Activated CD8-positive, alpha-beta memory T cell treated with anti-CD3 and anti-CD28 coated beads, Interleukin-2, amount 10 ng/mL, durations not matched to agents 7 days and 5 days (primary cell): ENCODE measurements at regions of chr1 and their contacts with region 1.

Region 1: DNA sequence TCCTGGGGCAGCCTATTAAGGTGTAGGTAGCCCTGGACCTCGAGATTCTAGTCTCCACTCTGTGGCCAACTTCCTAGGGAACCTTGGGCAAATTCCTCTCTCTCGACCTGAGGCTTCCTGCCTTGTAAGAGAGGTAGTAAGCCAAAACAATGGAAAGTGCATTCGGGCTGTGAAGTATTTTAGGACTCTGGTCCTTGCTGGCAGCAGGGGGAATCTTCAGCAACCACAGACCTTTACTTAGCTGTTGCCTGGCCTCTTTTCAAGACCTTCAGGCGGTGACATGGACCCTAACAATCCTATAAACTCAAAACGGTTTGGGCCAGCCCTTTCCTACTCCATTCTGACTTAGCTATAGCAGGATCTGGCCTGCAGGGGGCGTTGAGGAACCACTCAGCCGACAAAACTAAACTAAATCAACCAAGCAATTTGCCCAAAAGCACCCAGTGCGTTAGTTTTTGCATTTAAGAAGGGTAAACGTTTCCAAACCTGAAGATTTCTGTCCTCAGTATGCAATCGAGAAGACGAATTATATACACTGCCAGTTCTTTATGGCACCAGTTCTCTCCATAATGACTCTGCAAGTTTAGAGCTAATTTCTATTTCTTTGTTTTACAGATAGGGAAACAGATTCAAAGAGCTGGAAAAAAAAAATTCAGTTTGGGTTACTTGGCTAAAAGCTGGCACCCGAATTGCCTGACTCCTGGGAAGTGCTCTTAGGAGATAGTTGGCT is 10.9 kb upstream of the SESN2 start:
- DNase-seq: peak; percentile 91
- ATAC-seq: peak; percentile 18
- H3K4me3 Mint-ChIP-seq: peak overlapping the region; percentile 89
- H3K27ac Mint-ChIP-seq: peak overlapping the region; percentile 100
- H3K4me1 Mint-ChIP-seq: peaks cover 52% of the 10 kb centered on the region
- H3K27me3 Mint-ChIP-seq: no peaks in the 10 kb centered on the region

Region 2: GRCh38 chr1:28144203-28145135 is 104.0 kb before region 1 on chr1:
- CTCF ChIA-PET with region 1: no interaction called
- DNase-seq: peak; percentile 76
- ATAC-seq: peak; percentile 96
- H3K4me3 Mint-ChIP-seq: no peak overlapping the region
- H3K27ac Mint-ChIP-seq: no peak overlapping the region
- H3K4me1 Mint-ChIP-seq: peaks cover 18% of the 10 kb centered on the region
- H3K27me3 Mint-ChIP-seq: peaks cover 68% of the 10 kb centered on the region

Region 3: DNA sequence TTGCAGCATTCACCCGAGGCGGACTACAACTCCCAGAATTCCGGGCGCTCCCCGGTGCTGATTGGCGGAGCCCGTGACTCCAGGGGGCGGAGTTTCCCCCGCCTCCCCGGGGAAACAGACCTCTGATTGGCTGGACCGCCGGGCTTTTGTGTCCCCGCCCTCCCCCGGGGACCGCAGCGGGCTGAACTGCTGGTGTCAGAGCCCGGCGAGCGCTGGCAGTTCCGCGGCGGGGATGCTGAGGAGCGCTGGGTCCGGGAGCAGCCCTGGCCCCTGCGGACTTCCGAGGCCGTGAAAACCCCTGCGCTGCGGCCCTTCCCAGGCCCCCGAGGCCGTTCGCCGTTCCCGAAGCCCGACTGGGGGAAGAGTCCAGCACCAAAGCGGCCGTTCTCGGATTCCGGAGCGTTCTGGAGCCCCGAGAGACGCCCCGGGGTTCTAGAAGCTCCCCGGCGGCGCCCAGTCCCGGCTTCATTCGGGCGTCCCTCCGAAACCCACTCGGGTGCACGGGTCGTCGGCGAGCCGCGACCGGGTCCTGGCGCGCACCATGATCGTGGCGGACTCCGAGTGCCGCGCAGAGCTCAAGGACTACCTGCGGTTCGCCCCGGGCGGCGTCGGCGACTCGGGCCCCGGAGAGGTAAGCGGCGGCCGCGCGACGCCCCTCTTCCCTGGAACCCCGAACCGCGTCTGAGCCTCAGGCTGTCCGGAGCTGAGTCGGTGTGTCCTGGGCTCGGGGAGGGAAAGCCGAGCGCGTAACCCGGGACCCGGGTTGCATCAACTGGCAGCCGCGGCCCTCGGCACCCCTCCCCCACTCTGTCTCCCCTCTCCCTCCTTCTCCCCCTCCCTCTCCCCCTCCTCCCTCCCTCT is 11.1 kb after region 1 on chr1 and contains the start of gene SESN2:
- CTCF ChIA-PET with region 1: interaction called, 74 read pairs
- DNase-seq: peak; percentile 100
- ATAC-seq: peak; percentile 93
- H3K4me3 Mint-ChIP-seq: peak within 1 kb of the TSS; percentile 73
- H3K27ac Mint-ChIP-seq: peak within 1 kb of the TSS; percentile 92
- H3K4me1 Mint-ChIP-seq: peaks cover 53% of the 10 kb centered on the region
- H3K27me3 Mint-ChIP-seq: no peaks in the 10 kb centered on the region
- total RNA-seq, gene SESN2: 14.2 to 21.5 TPM

Region 4: DNA sequence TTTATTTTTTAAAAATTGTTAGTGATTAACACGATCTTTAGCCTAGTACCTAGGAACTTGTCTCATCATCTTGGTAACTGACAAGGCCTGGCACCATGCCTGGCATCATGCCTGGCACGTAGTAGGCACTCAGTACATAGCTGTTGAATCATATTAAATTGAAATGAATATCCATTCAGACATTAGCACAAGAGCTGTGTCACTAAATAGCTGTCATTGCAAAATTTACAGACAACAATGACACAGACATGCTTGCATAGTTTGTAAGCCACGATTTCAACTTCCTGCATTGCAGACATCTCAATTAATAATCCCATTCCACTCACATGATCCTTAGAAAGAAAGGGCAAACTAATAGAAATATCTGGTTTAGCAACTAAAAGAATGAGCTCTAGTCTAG is 105.7 kb after region 1 on chr1:
- CTCF ChIA-PET with region 1: interaction called, 29 read pairs
- DNase-seq: no peak
- ATAC-seq: no peak
- H3K4me3 Mint-ChIP-seq: no peak overlapping the region
- H3K27ac Mint-ChIP-seq: no peak overlapping the region
- H3K4me1 Mint-ChIP-seq: peaks cover 10% of the 10 kb centered on the region
- H3K27me3 Mint-ChIP-seq: no peaks in the 10 kb centered on the region

Region 5: DNA sequence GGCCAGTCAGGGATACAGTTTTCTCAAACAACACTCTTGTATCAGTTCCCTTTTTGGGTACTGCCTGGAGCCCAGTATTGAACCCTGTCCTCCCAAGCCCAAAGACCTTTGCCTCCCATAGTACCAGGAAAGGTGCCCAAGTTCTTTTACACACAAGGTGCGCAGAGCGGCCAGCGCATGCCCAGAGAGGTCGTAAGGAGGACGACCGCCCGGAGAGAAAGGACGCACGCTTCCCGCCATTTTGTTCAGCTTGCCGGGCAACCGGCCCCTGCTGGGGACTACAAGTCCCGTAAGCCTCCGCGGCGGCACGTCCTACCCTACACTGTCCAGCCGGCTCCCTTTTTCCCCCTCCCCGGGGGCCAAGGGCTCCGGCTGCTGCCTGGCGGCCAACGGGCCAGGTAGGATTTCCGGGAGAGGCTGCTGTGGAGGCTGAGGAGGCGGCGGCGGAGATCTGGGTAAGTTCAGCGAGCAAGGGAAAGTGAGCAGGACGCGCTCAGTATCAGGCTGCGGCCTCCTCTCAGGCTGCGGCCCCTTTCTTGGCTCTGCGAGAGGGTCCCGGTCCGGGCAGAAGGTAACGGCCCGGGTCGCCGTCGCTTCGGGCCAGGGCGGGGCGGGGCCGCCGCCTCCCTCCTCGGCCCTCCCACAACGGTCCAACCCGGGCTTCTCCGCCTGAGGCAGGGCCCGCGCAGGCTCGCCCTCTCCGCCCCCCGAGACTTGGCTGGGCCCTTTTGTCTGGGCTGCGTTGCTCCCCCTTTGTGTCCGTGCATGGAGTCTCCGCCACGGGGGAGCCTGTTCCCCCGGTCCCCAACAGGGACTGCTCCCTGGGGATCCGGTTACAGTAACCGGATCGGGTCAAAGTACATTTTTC is 121.2 kb after region 1 on chr1 and contains the start of gene PHACTR4:
- CTCF ChIA-PET with region 1: interaction called, 23 read pairs
- DNase-seq: peak; percentile 92
- ATAC-seq: peak; percentile 92
- H3K4me3 Mint-ChIP-seq: peak within 1 kb of the TSS; percentile 96
- H3K27ac Mint-ChIP-seq: peak within 1 kb of the TSS; percentile 91
- H3K4me1 Mint-ChIP-seq: peaks cover 36% of the 10 kb centered on the region
- H3K27me3 Mint-ChIP-seq: no peaks in the 10 kb centered on the region
- total RNA-seq, gene PHACTR4: 26.8 to 27.8 TPM